ENCODE measurements at regions of chr20 and their contacts with region 1.

Region 1: DNA sequence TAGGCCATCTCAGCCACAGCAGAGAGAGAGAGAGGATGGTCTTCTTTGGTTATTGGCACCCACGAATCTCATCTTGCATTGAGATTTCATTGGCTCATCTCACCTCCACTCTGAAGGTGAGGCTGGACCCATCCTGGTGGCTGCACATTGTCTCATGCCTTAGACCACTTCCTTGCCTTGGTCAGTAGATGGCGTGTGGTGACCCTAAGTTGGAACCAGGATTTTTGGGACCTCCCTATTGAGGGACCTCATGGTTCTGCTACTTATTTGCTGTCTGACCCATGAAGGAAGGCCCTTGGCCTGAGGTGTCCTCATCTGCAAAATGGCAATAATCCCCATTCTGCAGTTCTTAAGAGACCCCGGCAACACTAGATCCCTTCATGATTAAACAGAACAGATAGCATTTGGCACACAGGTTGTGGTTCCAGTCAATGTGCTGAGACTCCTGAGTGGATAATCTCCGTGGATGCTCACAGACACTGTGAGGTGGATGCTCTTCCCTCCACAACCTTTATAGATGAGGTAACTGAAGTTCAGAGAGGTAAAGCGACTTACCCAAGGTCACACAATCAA is 21.5 kb upstream of the AAR2 start:
- DNase-seq: peak; percentile 47
- H3K4me3 ChIP-seq: no peak overlapping the region
- H3K27ac ChIP-seq: no peak overlapping the region
- H3K4me1 ChIP-seq: no peaks in the 10 kb centered on the region
- H3K27me3 ChIP-seq: no peaks in the 10 kb centered on the region
- CTCF ChIP-seq: peak; percentile 67

Region 2: DNA sequence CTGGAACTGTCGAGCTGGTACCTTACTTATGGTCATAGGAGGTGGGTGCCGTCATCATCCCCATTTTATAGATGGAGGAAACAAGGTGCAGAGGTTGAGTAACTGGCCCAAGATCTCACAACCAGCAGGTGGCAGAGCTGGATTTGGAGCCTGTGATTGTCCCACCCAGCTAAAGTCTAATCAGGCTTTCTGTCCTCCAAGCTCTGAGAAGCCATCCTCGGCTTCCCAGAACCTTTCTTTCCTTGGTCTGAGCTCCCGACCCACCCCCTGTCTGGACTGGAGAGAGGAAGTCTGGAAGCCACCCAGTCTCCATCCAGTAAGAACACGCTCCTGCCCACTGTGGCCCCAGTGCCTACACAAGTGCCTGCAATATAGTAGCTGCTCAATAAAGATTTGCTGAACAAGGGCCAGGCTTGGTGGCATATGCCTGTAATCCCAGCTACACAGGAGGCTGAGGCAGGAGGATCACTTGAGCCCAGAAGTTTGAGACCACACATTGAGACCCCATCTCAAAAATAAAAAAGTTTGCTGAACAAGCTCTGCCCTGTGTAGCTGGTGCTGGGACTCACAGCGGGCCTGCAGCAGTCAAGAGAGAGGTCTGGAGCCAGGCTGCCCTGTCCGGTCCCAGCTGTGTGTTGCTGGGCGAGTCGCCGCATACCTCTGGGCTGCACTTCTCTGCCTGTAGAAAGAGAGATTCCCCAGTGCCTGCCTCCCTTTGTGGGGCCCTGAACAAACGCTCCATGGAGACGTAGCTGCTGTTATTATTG is 58.8 kb after region 1 on chr20:
- CTCF ChIA-PET with region 1: no interaction called
- POLR2A ChIA-PET with region 1: no interaction called
- intact Hi-C with region 1: no loop called
- DNase-seq: peak; percentile 30
- H3K4me3 ChIP-seq: no peak overlapping the region
- H3K27ac ChIP-seq: no peak overlapping the region
- H3K4me1 ChIP-seq: no peaks in the 10 kb centered on the region
- H3K27me3 ChIP-seq: no peaks in the 10 kb centered on the region
- CTCF ChIP-seq: peak; percentile 45

Region 3: DNA sequence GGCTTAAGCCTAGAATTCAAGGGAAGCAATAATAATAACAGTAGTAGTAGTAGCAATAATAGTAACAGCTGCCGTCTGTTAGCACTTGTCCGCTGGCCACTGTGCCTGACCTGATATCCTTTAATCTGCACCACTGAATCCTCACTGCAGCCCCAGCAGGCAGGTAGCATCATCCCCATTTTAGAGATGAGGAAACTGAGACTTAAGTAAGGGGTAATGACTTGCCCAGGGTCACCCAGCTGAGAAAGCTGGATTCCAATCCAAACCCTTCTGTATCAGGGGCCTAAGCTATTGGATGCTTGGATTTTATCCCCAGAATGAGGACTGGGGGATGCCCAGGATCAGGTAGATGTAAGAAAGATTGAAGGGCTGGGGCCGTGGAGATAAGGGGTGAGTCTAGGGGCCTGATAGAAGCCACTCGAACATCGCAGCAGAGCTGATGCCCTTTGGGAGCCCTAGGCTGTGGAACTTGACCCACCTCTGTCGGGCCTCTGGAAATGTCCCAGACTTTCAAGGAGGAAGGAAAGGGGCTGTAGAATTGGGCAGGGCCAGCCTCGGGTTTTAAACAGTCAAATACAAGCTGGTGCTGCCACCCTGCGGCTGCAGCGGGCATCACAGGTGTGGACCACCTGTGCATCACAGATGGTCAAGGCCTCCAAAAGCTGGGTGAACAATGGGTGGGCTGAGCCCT is 224.4 kb after region 1 on chr20:
- CTCF ChIA-PET with region 1: interaction called, 4 read pairs
- POLR2A ChIA-PET with region 1: no interaction called
- intact Hi-C with region 1: loop called (anchors 1 kb)
- DNase-seq: peak; percentile 71
- H3K4me3 ChIP-seq: no peak overlapping the region
- H3K27ac ChIP-seq: no peak overlapping the region
- H3K4me1 ChIP-seq: no peaks in the 10 kb centered on the region
- H3K27me3 ChIP-seq: no peaks in the 10 kb centered on the region
- CTCF ChIP-seq: peak; percentile 97

Region 4: GRCh38 chr20:36506253-36506652 is 291.5 kb after region 1 on chr20:
- CTCF ChIA-PET with region 1: interaction called, 10 read pairs
- POLR2A ChIA-PET with region 1: no interaction called
- intact Hi-C with region 1: no loop called
- DNase-seq: peak; percentile 39
- H3K4me3 ChIP-seq: no peak overlapping the region
- H3K27ac ChIP-seq: no peak overlapping the region
- H3K4me1 ChIP-seq: no peaks in the 10 kb centered on the region
- H3K27me3 ChIP-seq: no peaks in the 10 kb centered on the region
- CTCF ChIP-seq: peak; percentile 63

Region 5: DNA sequence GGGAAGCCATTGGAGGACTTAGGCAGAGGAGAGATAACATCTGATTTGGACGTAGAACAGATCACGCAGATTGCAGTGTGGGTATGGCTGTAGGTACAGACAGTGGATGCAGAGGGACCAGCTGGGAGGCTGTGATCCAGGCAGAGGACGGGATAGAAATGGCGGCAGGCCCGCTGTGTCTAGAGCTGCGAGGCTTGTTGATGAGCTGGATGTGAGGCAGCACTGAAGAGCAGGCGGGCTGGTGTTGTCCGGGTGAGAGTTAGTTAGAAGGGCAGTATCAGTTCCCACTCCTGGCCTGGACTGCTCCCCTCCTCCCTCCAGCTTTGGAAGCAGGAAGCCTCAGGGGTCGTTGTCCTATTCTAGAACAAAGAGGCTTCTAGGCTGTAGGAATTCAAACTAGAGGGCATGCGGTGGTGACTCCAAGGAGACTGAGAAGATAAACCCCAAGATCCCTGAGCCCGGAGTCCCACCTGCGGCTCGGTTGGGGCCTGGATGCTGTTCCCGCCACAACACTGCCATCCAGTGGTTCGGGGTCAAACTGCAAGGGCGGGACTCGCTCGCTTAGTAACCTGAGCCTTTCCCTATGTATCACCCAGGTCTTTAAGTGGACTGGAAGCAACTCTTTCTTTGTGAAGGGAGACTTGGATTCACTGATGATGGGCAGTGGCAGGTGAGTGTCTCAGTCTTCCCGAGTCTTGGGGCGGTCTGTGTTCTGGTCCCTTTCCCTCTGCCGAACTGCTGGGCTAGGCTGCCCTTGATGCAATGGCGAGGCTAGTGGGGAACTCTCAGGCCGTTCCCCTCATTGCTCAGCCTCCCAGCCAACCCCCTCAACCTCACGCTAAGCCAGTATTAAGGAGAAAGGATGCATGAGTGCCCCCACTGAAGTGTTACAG is 672.3 kb after region 1 on chr20:
- CTCF ChIA-PET with region 1: no interaction called
- POLR2A ChIA-PET with region 1: no interaction called
- intact Hi-C with region 1: loop called (anchors 10 kb)
- DNase-seq: peak; percentile 88
- H3K4me3 ChIP-seq: no peak overlapping the region
- H3K27ac ChIP-seq: no peak overlapping the region
- H3K4me1 ChIP-seq: peaks cover 5% of the 10 kb centered on the region
- H3K27me3 ChIP-seq: no peaks in the 10 kb centered on the region
- CTCF ChIP-seq: peak; percentile 97